ENCODE measurements at regions of chr9 and their contacts with region 1.

Region 1: DNA sequence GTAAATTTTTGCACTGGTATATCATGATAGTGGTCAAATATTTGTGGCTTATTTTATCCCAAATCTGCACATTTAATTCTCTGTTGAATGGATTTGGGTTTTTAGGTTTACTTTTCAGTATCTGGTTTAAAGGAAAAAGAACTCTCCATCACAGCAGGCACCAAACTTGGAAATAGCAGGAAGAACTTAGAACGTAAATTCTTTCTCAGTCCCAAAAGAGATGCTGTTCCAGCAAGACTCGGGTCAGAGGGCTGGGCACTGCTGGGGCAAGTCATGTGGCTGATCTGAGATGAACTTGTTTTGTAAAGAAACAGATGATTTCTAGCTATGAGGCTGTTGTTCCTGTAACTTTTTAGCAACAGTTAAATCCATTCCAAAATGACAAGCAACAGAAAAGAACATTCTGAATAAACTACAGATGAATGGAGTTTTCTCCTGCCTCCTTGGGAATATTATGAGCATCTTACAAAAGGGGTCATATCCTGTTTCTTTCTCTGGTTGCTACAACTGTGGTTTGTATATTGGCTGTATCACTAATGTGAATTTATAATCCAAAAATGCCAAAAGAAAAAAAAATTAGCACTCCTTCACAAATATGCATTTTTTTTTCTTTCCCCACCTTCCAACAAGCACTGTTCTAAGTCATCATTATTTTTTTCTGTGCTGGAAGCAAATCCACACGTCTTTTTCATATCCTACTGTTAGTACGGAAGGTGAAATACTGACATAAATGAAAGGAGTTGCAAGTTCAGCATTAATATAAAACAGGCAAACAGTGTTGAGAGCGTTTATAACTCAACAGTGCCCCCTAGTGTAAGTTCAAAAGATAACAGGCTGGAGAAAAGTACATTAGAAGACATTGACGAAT is 31.1 kb downstream of the OR2K2 start:
- DNase-seq: peak in 1 of 2 donors; percentile 52
- ATAC-seq: peak in 1 of 3 donors; percentile 56
- H3K4me3 ChIP-seq: no peak overlapping the region
- H3K4me3 Mint-ChIP-seq: no peak overlapping the region
- H3K27ac ChIP-seq: no peak overlapping the region
- H3K27ac Mint-ChIP-seq: no peak overlapping the region
- H3K4me1 ChIP-seq: no peaks in the 10 kb centered on the region
- H3K4me1 Mint-ChIP-seq: no peaks in the 10 kb centered on the region
- H3K27me3 ChIP-seq: no peaks in the 10 kb centered on the region
- H3K27me3 Mint-ChIP-seq: peaks cover 6 to 10% of the 10 kb centered on the region in 2 donors
- CTCF ChIP-seq: peak; percentile 72

Region 2: GRCh38 chr9:110183208-110184145 is 1115.5 kb before region 1 on chr9:
- intact Hi-C with region 1: loop called (anchors 5 kb)
- DNase-seq: peak in 1 of 2 donors; percentile 70
- ATAC-seq: peak; percentile 71 to 82 (median 73)
- H3K4me3 ChIP-seq: no peak overlapping the region
- H3K4me3 Mint-ChIP-seq: no peak overlapping the region
- H3K27ac ChIP-seq: no peak overlapping the region
- H3K27ac Mint-ChIP-seq: no peak overlapping the region
- H3K4me1 ChIP-seq: no peaks in the 10 kb centered on the region
- H3K4me1 Mint-ChIP-seq: peaks cover 6 to 7% of the 10 kb centered on the region in 2 donors
- H3K27me3 ChIP-seq: no peaks in the 10 kb centered on the region
- H3K27me3 Mint-ChIP-seq: no peaks in the 10 kb centered on the region
- CTCF ChIP-seq: peak; percentile 70

Region 3: DNA sequence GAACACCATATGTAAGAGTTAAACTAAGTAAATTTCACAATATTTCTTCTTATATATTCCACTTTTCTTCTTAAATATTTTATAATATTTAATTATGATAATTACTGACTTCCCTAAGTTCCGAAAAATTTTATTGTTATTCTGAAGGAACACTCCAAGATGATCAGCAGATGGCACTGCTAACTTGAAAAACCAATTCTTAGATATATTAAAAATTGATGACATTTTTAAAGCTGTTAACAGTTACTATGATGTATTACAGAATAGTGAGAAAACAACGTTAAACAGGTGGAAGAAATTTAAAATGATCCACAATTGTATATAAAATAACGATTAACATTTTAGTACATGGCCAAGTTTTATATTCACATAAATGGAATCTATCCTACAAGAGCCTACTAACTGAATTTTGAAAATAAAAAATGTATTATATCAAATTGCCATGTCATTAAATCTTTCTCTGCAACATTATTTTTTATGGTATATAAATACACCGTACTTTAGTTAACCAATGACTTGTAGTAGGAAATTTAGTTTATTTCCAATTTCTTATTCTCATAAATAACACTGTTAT is 660.5 kb before region 1 on chr9:
- intact Hi-C with region 1: loop called (anchors 10 kb)
- DNase-seq: no peak
- ATAC-seq: no peak
- H3K4me3 ChIP-seq: no peak overlapping the region
- H3K4me3 Mint-ChIP-seq: no peak overlapping the region
- H3K27ac ChIP-seq: no peak overlapping the region
- H3K27ac Mint-ChIP-seq: no peak overlapping the region
- H3K4me1 ChIP-seq: no peaks in the 10 kb centered on the region
- H3K4me1 Mint-ChIP-seq: no peaks in the 10 kb centered on the region
- H3K27me3 ChIP-seq: no peaks in the 10 kb centered on the region
- H3K27me3 Mint-ChIP-seq: no peaks in the 10 kb centered on the region
- CTCF ChIP-seq: no peak

Region 4: DNA sequence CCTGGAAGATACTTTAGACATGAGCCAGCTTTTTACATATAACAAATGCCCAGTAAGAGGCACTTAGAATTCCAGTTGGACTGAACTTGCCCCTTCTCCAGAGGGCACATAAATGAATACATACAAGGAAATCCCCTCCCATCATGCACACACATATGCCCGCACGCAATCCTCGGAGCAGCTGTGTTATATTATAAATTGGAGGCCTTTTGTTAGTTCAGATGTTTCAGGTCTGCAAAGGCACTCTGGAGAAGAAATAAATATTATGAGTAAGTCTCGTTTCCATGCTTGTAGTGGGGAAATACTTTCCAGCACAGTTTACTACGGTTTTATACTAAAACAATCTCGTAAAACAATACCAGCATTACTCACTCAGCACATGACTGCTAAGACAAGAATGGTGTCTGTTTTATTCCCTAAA is 648.0 kb before region 1 on chr9:
- intact Hi-C with region 1: no loop called
- DNase-seq: no peak
- ATAC-seq: no peak
- H3K4me3 ChIP-seq: no peak overlapping the region
- H3K4me3 Mint-ChIP-seq: no peak overlapping the region
- H3K27ac ChIP-seq: no peak overlapping the region
- H3K27ac Mint-ChIP-seq: no peak overlapping the region
- H3K4me1 ChIP-seq: no peaks in the 10 kb centered on the region
- H3K4me1 Mint-ChIP-seq: no peaks in the 10 kb centered on the region
- H3K27me3 ChIP-seq: no peaks in the 10 kb centered on the region
- H3K27me3 Mint-ChIP-seq: no peaks in the 10 kb centered on the region
- CTCF ChIP-seq: no peak

Region 5: GRCh38 chr9:111386386-111386785 is 87.4 kb after region 1 on chr9:
- intact Hi-C with region 1: no loop called
- DNase-seq: no peak
- ATAC-seq: no peak
- H3K4me3 ChIP-seq: no peak overlapping the region
- H3K4me3 Mint-ChIP-seq: no peak overlapping the region
- H3K27ac ChIP-seq: no peak overlapping the region
- H3K27ac Mint-ChIP-seq: no peak overlapping the region
- H3K4me1 ChIP-seq: no peaks in the 10 kb centered on the region
- H3K4me1 Mint-ChIP-seq: no peaks in the 10 kb centered on the region
- H3K27me3 ChIP-seq: no peaks in the 10 kb centered on the region
- H3K27me3 Mint-ChIP-seq: no peaks in the 10 kb centered on the region
- CTCF ChIP-seq: no peak

Measured in natural killer cell (primary cell).